ENCODE measurements at regions of chr9 and their contacts with region 1.

Region 1: GRCh38 chr9:19925817-19926503 is 137.1 kb upstream of the SLC24A2 start:
- DNase-seq: peak; percentile 73
- H3K4me3 ChIP-seq: peak overlapping the region; percentile 44
- H3K27ac ChIP-seq: no peak overlapping the region
- H3K4me1 ChIP-seq: peaks cover 4% of the 10 kb centered on the region
- H3K27me3 ChIP-seq: no peaks in the 10 kb centered on the region
- CTCF ChIP-seq: peak; percentile 76

Region 2: DNA sequence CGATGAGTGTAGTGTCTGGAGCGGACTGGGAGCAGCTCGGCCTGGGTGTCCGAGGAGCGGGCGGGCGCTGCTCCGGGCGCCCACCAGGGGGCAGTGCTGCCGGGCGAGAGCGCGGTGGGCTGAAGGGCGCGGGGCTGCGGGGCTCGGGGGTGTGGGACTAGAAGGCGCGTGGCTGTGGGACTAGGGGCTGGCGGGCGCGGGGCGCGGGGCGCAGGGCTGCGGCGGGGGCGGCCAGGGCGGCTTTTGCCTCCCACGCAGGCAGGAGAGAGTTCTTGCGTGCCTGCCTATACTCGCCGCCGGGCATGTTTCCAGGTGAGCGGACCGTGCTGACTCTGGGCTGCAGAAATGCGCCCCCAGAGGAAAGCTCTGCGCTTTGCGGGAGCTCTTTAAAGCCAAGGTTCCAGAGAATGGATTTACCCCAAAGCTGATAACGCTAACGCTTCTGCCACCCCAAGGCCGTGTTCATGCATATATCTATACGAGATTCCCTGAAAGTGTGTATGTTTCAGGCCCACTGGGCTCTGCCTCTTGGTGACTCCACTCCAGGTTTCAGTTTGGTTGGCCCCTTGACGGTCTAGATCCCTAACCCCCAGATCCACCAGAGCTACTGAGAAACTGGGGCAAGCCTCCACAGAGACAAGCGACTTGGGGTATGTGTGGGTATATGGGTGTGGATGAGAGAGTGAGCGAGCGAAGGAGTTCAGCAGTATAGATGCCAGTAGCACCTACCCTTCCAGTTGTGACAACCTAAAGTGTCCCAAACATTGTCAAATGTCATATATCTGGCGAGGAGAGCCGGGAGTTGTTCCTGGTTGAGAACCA is 461.0 kb before region 1 on chr9:
- CTCF ChIA-PET with region 1: interaction called, 16 read pairs
- POLR2A ChIA-PET with region 1: no interaction called
- intact Hi-C with region 1: no loop called
- DNase-seq: peak; percentile 54
- H3K4me3 ChIP-seq: peak overlapping the region; percentile 44
- H3K27ac ChIP-seq: no peak overlapping the region
- H3K4me1 ChIP-seq: no peaks in the 10 kb centered on the region
- H3K27me3 ChIP-seq: no peaks in the 10 kb centered on the region
- CTCF ChIP-seq: peak; percentile 60

Region 3: GRCh38 chr9:19493174-19493811 is 432.7 kb before region 1 on chr9:
- CTCF ChIA-PET with region 1: no interaction called
- POLR2A ChIA-PET with region 1: no interaction called
- intact Hi-C with region 1: loop called (anchors 1 kb)
- DNase-seq: peak; percentile 44
- H3K4me3 ChIP-seq: no peak overlapping the region
- H3K27ac ChIP-seq: no peak overlapping the region
- H3K4me1 ChIP-seq: no peaks in the 10 kb centered on the region
- H3K27me3 ChIP-seq: no peaks in the 10 kb centered on the region
- CTCF ChIP-seq: peak; percentile 62

Region 4: DNA sequence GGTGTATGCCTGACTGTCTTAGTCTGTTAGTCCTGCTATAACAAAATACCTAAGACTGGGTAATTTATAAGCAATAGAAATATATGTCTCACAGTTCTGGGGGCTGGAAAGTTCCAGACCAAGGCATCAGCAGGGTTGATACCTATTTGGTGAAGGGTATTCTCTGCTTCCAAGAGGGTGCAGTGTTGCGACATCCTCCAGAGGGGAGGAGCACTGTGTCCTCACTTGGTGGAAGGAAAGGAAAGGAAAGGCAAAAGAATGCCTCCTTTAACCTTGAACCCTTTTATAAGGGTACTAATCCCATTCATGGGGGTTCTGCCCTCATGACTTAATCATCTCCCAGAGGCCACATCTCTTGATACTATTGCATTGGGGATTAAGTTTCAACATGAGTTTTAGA is 95.2 kb before region 1 on chr9:
- CTCF ChIA-PET with region 1: no interaction called
- POLR2A ChIA-PET with region 1: no interaction called
- intact Hi-C with region 1: no loop called
- DNase-seq: no peak
- H3K4me3 ChIP-seq: no peak overlapping the region
- H3K27ac ChIP-seq: no peak overlapping the region
- H3K4me1 ChIP-seq: no peaks in the 10 kb centered on the region
- H3K27me3 ChIP-seq: no peaks in the 10 kb centered on the region
- CTCF ChIP-seq: no peak

Region 5: DNA sequence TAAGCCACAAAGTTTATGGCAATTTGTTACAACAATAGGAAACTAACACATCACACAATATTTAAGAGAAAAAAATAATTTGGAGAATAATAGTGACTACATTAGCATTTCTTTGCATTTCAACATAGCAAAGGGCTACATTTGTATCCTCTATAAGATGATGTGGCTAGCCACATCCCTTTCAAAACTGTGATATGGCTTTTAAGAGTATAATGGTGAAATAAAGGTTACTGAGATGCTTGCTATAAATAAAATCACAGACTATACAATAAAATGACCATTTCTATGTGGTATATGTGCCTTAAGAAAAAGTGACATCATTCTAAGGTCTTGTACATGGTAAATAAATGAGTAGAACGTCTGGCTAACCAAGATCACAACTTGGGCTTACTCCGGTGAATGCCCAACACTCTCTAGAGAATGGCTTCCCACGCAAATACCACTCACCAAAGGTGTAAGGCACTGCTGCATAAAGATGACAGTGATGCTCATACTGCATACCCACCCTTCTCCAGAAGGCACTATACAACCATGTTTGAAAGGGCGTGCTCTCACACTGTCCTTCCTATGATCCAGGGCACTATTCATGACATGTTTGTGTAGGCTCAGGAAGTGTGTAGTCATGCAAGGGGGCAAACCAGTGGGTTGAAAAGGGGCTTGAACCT is 409.8 kb after region 1 on chr9:
- CTCF ChIA-PET with region 1: interaction called, 15 read pairs
- POLR2A ChIA-PET with region 1: no interaction called
- intact Hi-C with region 1: no loop called
- DNase-seq: no peak
- H3K4me3 ChIP-seq: no peak overlapping the region
- H3K27ac ChIP-seq: no peak overlapping the region
- H3K4me1 ChIP-seq: no peaks in the 10 kb centered on the region
- H3K27me3 ChIP-seq: no peaks in the 10 kb centered on the region
- CTCF ChIP-seq: no peak

Region 6: GRCh38 chr9:20622330-20623020 is 696.5 kb after region 1 on chr9 and contains the start of gene MLLT3:
- CTCF ChIA-PET with region 1: no interaction called
- POLR2A ChIA-PET with region 1: no interaction called
- intact Hi-C with region 1: loop called (anchors 5 kb)
- DNase-seq: peak; percentile 95
- H3K4me3 ChIP-seq: peak within 1 kb of the TSS; percentile 74
- H3K27ac ChIP-seq: peak within 1 kb of the TSS; percentile 87
- H3K4me1 ChIP-seq: peaks cover 27% of the 10 kb centered on the region
- H3K27me3 ChIP-seq: no peaks in the 10 kb centered on the region
- CTCF ChIP-seq: no peak
- total RNA-seq, gene MLLT3: 24.2 and 28.5 TPM in 2 replicates

Region 7: GRCh38 chr9:21110708-21111576 is 1185.0 kb after region 1 on chr9:
- CTCF ChIA-PET with region 1: no interaction called
- POLR2A ChIA-PET with region 1: no interaction called
- intact Hi-C with region 1: loop called (anchors 2 kb)
- DNase-seq: peak; percentile 74
- H3K4me3 ChIP-seq: no peak overlapping the region
- H3K27ac ChIP-seq: no peak overlapping the region
- H3K4me1 ChIP-seq: peaks cover 4% of the 10 kb centered on the region
- H3K27me3 ChIP-seq: no peaks in the 10 kb centered on the region
- CTCF ChIP-seq: peak; percentile 69